Colonic mucosa (tissue), 4 donors: ENCODE measurements at regions of chr1 and their contacts with region 1.

Region 1: GRCh38 chr1:167715157-167715999 is 6.4 kb upstream of the MPZL1 start:
- DNase-seq: peak; percentile 94
- H3K4me3 ChIP-seq: peak overlapping the region; percentile 46
- H3K27ac ChIP-seq: peak overlapping the region; percentile 75
- H3K4me1 ChIP-seq: no peaks in the 10 kb centered on the region
- H3K27me3 ChIP-seq: no peaks in the 10 kb centered on the region
- CTCF ChIP-seq: peak; percentile 76

Region 2: DNA sequence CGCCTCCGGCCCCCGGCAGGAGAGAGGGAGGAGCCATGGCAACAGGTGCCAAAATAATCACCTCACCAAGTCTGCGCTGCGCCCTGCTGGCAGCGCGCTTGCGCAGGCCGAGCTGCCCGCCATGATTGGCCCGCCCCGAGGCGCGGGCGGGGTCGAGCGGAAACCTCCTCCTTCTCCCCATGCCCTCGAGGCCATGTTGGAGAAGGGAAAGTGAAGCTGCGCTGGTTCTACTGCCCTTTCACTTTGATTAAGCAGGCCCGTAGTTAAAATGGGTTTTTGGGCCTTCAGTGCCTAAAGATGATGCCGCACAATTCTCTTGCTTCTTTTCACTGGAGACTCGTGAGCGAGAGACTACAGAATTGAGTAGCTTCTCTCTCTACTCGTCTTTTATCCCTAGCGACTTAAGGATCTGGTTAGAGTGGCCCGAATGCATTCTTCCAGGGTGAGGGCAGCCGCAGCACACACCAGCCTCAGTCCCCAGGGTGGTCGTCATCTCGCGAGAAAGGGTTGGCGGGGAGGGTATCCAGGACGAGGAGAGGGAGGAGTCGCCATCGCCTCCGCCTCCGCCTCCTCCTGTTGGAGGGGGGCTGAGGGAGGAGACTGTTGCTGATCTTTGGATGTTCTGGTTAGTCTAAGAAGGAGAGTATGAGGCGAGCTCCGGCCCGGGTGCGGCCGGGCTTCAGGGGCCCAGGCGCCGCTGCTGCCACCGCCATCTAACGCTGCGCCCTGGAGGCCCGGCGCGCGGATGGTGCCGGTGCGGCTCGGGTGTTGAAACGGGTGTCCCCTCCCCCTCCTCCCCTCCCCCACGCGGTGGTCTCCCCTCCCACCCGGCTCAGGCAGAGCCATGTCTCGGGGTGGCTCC is 220.9 kb after region 1 on chr1 and contains the start of gene DCAF6:
- intact Hi-C with region 1: loop called (anchors 10 kb)
- DNase-seq: peak; percentile 97
- H3K4me3 ChIP-seq: peak within 1 kb of the TSS; percentile 86
- H3K27ac ChIP-seq: peak within 1 kb of the TSS; percentile 98
- H3K4me1 ChIP-seq: no peaks in the 10 kb centered on the region
- H3K27me3 ChIP-seq: no peaks in the 10 kb centered on the region
- CTCF ChIP-seq: no peak
- total RNA-seq, gene DCAF6: 47.2 to 67.0 TPM

Region 3: GRCh38 chr1:168004531-168004930 is 289.2 kb after region 1 on chr1:
- intact Hi-C with region 1: no loop called
- DNase-seq: no peak
- H3K4me3 ChIP-seq: no peak overlapping the region
- H3K27ac ChIP-seq: no peak overlapping the region
- H3K4me1 ChIP-seq: no peaks in the 10 kb centered on the region
- H3K27me3 ChIP-seq: no peaks in the 10 kb centered on the region
- CTCF ChIP-seq: no peak

Region 4: GRCh38 chr1:168082008-168082876 is 366.9 kb after region 1 on chr1:
- intact Hi-C with region 1: loop called (anchors 10 kb)
- DNase-seq: peak; percentile 81
- H3K4me3 ChIP-seq: no peak overlapping the region
- H3K27ac ChIP-seq: no peak overlapping the region
- H3K4me1 ChIP-seq: peaks cover 8% of the 10 kb centered on the region
- H3K27me3 ChIP-seq: no peaks in the 10 kb centered on the region
- CTCF ChIP-seq: peak; percentile 81

Region 5: GRCh38 chr1:168096296-168097165 is 381.2 kb after region 1 on chr1:
- intact Hi-C with region 1: no loop called
- DNase-seq: peak; percentile 13
- H3K4me3 ChIP-seq: no peak overlapping the region
- H3K27ac ChIP-seq: no peak overlapping the region
- H3K4me1 ChIP-seq: peaks cover 4% of the 10 kb centered on the region
- H3K27me3 ChIP-seq: no peaks in the 10 kb centered on the region
- CTCF ChIP-seq: no peak